ENCODE measurements at regions of chr7 and their contacts with region 1.

Region 1: DNA sequence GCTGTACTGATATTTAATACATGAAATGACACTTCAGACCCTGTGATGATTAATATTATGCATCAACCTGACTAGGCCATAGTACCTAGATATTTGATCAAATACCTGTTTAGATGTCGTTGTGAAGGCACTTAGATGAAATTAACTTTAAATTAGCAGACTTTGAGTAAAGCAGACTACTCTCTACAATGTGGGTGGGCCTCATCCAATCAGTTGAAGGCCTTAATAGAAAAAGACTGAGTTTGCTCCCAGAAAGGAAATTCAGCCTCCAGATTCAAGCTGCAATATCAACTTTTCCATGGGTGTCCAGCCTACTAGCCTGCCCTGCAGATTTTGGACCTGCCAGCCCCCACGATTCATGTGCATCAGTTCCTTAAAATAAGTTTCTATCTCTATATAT is 68.6 kb upstream of the TMEM168 start:
- DNase-seq: no peak
- ATAC-seq: no peak
- H3K4me3 Mint-ChIP-seq: no peak overlapping the region
- H3K27ac Mint-ChIP-seq: no peak overlapping the region
- H3K4me1 Mint-ChIP-seq: no peaks in the 10 kb centered on the region
- H3K27me3 Mint-ChIP-seq: no peaks in the 10 kb centered on the region

Region 2: GRCh38 chr7:112869111-112869757 is 10.4 kb after region 1 on chr7:
- CTCF ChIA-PET with region 1: interaction called, 17 read pairs
- DNase-seq: peak; percentile 70
- ATAC-seq: peak; percentile 76
- H3K4me3 Mint-ChIP-seq: no peak overlapping the region
- H3K27ac Mint-ChIP-seq: no peak overlapping the region
- H3K4me1 Mint-ChIP-seq: peaks cover 10% of the 10 kb centered on the region
- H3K27me3 Mint-ChIP-seq: no peaks in the 10 kb centered on the region

Measured in activated CD8-positive, alpha-beta memory T cell treated with anti-CD3 and anti-CD28 coated beads, Interleukin-2, amount 10 ng/mL, durations not matched to agents 7 days and 5 days (primary cell).